AG04449 (cell line): ENCODE measurements at regions of chr9 and their contacts with region 1.

Region 1: GRCh38 chr9:72280913-72281500 is 84.0 kb downstream of the ZFAND5 start:
- DNase-seq: no peak
- H3K4me3 ChIP-seq: no peak overlapping the region
- CTCF ChIP-seq: peak; percentile 89

Region 2: DNA sequence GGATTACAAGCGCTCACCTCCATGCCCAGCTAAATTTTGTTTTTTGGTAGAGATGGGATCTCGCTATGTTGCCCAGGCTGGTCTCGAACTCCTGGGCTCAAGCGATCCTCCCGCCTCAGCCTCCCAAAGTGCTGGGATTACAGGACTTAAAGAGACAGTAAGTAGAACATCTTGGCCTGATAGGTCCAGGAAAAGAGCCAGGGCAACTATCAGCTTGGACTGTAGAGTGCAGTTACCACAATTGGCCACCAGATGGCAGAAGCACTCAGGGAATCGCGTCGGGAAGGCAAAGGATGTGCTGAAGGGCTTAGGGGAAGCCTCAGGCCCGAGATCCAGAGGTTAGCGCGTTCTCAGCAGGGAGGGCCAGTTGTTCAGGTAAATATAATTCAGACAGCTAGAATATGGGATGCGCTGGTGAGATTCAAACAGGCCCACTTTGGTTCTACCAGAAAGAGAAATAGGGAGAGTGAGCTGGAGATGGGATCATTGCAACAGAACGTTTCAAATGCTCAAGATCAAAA is 242.1 kb before region 1 on chr9:
- CTCF ChIA-PET with region 1: interaction called, 238 read pairs
- POLR2A ChIA-PET with region 1: no interaction called
- DNase-seq: no peak
- H3K4me3 ChIP-seq: no peak overlapping the region
- CTCF ChIP-seq: peak; percentile 93

Region 3: DNA sequence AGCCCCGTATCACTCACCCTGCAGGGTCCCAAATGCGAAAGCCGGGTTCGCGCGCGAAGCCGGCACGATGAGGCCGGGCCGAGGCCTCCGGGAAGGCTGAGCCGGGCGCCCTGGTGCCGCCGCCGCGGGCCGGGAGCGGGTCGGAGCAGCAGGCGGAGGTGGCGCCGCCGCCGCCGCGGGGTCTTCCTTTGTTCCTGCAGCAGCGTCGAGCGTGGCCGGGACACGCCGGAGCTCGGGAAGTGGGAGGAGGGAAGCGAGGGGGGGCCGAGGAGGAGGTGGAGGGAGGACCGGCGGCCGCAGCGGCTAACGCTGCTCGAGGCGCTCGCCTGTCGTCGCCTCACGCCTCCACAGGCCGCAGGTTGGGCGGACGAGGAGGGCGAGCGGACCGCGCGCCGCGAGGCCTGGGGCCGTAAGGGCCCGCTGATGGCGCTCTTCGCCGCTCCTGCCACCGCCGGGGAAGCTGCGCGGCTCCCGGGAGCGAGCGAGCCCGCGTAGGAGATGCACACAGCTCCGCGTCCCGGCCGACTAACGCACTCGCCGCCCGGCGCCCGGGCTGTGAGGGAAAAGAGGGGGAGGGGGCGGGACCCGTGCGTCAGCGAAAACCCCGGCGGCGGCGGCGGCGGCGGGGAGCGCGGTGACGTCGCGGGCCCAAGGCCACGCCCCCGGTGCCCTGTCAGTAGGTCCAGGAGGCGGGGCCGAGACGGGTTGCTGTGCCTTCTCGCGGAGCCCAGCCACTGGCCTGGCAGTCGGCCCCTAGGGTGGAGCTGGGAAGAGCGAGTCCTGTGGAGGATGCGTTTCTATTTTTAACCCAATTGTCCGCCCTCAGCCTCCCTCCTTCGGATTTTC is 83.9 kb after region 1 on chr9 and contains the start of gene ZFAND5:
- CTCF ChIA-PET with region 1: no interaction called
- POLR2A ChIA-PET with region 1: no interaction called
- DNase-seq: peak; percentile 89
- H3K4me3 ChIP-seq: peak within 1 kb of the TSS; percentile 77
- CTCF ChIP-seq: no peak

Region 4: GRCh38 chr9:72592502-72593403 is 311.7 kb after region 1 on chr9:
- CTCF ChIA-PET with region 1: interaction called, 21 read pairs
- POLR2A ChIA-PET with region 1: no interaction called
- DNase-seq: no peak
- H3K4me3 ChIP-seq: no peak overlapping the region
- CTCF ChIP-seq: peak; percentile 59

Region 5: GRCh38 chr9:72753266-72753893 is 472.4 kb after region 1 on chr9:
- CTCF ChIA-PET with region 1: interaction called, 103 read pairs
- POLR2A ChIA-PET with region 1: no interaction called
- DNase-seq: no peak
- H3K4me3 ChIP-seq: no peak overlapping the region
- CTCF ChIP-seq: peak; percentile 32

Region 6: GRCh38 chr9:72794947-72795346 is 513.9 kb after region 1 on chr9:
- CTCF ChIA-PET with region 1: interaction called, 10 read pairs
- POLR2A ChIA-PET with region 1: no interaction called
- DNase-seq: no peak
- H3K4me3 ChIP-seq: no peak overlapping the region
- CTCF ChIP-seq: no peak

Region 7: DNA sequence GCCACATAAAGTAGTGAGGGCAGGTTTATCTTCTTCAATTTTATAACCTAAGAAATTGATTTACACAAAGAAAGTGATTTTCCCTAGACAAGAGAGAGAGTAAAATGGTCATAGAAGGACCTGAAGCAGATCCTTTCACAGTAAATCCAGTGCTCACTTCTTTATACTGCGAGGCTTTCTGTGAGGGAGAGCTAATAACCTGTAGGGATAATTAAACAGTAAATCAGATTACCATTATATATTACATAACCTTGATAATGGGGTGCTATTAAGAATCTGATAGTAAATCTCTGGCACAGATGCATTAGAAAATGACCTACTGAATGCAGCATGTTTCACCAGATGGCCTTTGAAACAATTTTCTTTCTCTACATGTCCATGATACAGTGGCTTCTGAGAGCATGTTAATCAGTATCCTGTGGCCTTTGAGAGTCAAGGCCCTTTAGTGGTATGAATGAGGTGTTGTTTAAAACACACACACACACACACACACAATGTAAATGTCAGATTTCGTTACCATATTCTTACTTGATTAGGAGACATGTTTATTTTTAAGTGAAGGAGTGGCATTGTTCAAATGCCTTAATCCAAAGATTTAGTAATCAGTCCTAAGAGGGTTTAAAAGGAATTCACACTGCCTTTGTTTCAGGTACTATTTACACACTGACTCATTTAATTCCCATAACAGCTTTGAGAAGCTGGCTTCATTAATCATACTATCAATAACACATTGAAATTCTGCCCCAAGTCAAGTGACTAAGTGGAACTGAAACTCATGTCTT is 547.1 kb after region 1 on chr9:
- CTCF ChIA-PET with region 1: interaction called, 274 read pairs
- POLR2A ChIA-PET with region 1: no interaction called
- DNase-seq: no peak
- H3K4me3 ChIP-seq: no peak overlapping the region
- CTCF ChIP-seq: no peak

Region 8: GRCh38 chr9:72856972-72857623 is 576.1 kb after region 1 on chr9:
- CTCF ChIA-PET with region 1: interaction called, 20 read pairs
- POLR2A ChIA-PET with region 1: no interaction called
- DNase-seq: peak; percentile 29
- H3K4me3 ChIP-seq: no peak overlapping the region
- CTCF ChIP-seq: peak; percentile 46